ENCODE measurements at regions of chr9 and their contacts with region 1.

Region 1: DNA sequence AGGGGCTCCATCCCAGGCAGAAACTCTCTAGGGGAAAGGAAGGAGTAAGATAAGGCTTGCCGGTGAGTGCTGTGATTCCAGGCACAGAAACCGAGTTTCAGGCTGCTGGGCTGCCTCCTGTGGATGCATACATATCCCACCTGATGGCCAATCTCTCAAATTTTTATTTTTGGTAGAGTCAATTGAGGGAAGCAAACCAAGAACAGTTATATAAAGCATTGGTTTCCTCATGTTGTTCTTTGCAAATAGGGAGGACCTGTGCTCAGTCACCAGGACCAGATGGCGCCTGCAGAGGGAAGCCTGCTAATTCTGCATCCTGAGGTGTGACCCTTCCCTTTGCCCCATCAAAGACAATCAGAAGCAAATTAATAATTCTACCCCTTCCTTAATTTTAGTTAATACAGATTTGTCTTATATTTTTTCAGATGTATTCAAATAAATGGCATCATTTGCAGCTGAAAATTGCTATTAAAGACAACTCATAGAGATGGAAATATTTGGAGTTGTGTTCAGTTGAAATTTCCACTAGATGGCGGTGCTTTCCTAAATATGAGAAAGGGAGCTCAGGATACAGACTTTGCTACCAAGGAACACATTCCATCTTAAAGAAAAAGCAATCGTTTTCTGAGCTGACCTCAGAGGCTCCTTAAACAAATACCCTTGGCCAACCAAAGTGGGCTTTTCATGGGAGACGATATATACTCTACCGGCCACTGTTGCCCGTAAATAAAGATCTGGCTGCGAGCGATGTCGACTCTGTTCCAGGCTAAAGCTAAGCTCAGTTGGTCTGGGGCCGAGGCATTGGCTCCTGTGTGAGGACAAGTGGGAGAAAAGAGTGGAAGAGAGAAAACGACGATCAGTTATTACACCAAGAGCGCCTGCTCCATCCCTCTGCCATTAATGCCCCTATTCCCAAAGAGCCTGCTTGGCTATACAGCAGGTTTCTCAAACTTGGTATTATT is 225.7 kb upstream of the KLF9 start:
- DNase-seq: peak in 2 of 7 donors; percentile 10 to 36
- H3K4me3 ChIP-seq: no peak overlapping the region
- H3K27ac ChIP-seq: no peak overlapping the region
- H3K4me1 ChIP-seq: no peaks in the 10 kb centered on the region
- H3K27me3 ChIP-seq: no peaks in the 10 kb centered on the region
- CTCF ChIP-seq: peak; percentile 69 to 82 (median 77)
- POLR2A ChIP-seq: no peak

Region 2: GRCh38 chr9:71001780-71002386 is 361.7 kb after region 1 on chr9:
- intact Hi-C with region 1: loop called in 1 of 2 experiments (anchors 10 kb)
- DNase-seq: peak in 5 of 7 donors; percentile 23 to 53 (median 33)
- H3K4me3 ChIP-seq: no peak overlapping the region
- H3K27ac ChIP-seq: no peak overlapping the region
- H3K4me1 ChIP-seq: no peaks in the 10 kb centered on the region
- H3K27me3 ChIP-seq: no peaks in the 10 kb centered on the region
- CTCF ChIP-seq: peak in 5 of 6 experiments; percentile 23 to 58 (median 54)
- POLR2A ChIP-seq: no peak

Measured in adrenal gland (tissue), 19 donors.